Calu3 (cell line): ENCODE measurements at regions of chr10 and their contacts with region 1.

Region 1: GRCh38 chr10:29446327-29446726 is 157.5 kb downstream of the LYZL1 start:
- DNase-seq: no peak
- H3K4me3 Mint-ChIP-seq: no peak overlapping the region
- H3K27ac Mint-ChIP-seq: no peak overlapping the region
- H3K4me1 Mint-ChIP-seq: peaks cover 21% of the 10 kb centered on the region
- H3K27me3 Mint-ChIP-seq: no peaks in the 10 kb centered on the region
- CTCF ChIP-seq: no peak

Region 2: GRCh38 chr10:28628184-28628893 is 818.0 kb before region 1 on chr10:
- CTCF ChIA-PET with region 1: no interaction called
- intact Hi-C with region 1: loop called (anchors 5 kb)
- DNase-seq: peak; percentile 86
- H3K4me3 Mint-ChIP-seq: no peak overlapping the region
- H3K27ac Mint-ChIP-seq: no peak overlapping the region
- H3K4me1 Mint-ChIP-seq: peaks cover 21% of the 10 kb centered on the region
- H3K27me3 Mint-ChIP-seq: no peaks in the 10 kb centered on the region
- CTCF ChIP-seq: peak; percentile 89

Region 3: DNA sequence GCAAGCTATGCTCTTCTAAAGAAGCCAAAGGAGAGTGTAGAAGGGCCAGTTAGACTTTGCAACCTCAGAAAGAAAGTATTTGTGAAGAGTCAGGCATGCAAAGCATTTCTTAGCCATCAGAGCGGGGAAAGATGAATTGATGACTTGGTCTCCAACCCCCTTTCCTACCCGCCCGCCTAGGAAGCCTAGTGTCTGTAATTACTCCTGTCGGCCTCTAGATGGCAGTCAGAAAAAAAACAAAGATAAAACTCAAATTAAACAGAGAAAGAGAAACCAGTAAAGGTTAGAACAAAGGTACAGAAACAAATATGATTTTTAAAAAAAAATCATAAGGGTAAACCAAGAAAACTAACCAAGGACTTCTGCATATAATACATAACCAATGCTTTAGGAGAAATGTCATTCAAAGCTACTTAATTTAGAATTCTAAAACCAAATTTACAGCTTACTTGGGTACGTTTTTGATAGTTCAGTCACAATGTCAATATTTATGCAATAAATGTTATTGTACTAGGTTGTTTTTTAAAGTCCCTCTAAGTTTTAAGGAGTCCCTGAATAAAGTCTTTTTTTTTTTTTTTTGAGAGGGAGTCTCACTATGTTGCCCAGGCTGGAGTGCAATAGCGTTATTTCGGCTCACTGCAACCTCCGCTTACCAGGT is 59.9 kb before region 1 on chr10:
- CTCF ChIA-PET with region 1: no interaction called
- intact Hi-C with region 1: loop called (anchors 2 kb)
- DNase-seq: peak; percentile 17
- H3K4me3 Mint-ChIP-seq: no peak overlapping the region
- H3K27ac Mint-ChIP-seq: no peak overlapping the region
- H3K4me1 Mint-ChIP-seq: no peaks in the 10 kb centered on the region
- H3K27me3 Mint-ChIP-seq: peaks cover 60% of the 10 kb centered on the region
- CTCF ChIP-seq: peak; percentile 50